AG04450 (cell line): ENCODE measurements at regions of chr3 and their contacts with region 1.

Region 1: GRCh38 chr3:123750659-123751420 is 133.3 kb downstream of the MYLK start:
- DNase-seq: peak; percentile 88
- H3K4me3 ChIP-seq: no peak overlapping the region
- H3K27ac ChIP-seq: peak overlapping the region; percentile 97
- H3K27me3 ChIP-seq: no peaks in the 10 kb centered on the region
- CTCF ChIP-seq: peak; percentile 24; the same call in 1 of the 2 replicates

Region 2: DNA sequence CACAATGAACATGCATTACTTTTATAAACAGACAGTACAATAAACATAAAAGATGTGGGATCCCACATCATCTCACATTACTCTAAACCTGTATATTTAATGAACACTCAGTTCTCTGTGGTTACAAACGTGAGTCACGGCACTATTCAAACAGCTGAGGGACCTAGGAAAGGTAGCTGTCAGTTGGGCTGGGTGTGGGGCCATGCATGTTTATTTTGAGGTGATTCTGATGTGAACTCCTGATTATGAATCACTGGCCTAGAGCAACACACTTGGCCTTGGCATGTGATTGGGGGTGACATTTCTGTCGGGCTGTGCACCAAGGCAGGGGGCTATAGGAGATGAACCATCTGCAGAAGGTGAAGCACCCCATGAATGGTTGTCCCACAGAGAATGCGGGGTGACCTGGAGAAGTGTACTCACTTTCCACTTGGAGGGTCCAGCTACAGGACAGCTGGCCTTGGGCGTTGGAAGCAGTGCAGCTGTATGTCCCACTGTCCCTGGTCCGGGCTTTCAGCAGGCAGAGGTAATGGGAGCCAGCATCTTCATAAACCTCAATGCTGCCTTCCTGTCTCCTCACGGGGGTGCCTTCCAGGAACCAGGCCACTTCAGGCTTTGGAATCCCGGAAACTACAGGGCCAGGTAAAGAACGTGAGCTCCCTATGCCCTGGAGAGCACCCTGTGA is 18.2 kb before region 1 on chr3:
- CTCF ChIA-PET with region 1: no interaction called
- POLR2A ChIA-PET with region 1: interaction called, 35 read pairs
- DNase-seq: peak; percentile 88
- H3K4me3 ChIP-seq: no peak overlapping the region
- H3K27ac ChIP-seq: peak overlapping the region; percentile 91
- H3K27me3 ChIP-seq: no peaks in the 10 kb centered on the region
- CTCF ChIP-seq: no peak

Region 3: DNA sequence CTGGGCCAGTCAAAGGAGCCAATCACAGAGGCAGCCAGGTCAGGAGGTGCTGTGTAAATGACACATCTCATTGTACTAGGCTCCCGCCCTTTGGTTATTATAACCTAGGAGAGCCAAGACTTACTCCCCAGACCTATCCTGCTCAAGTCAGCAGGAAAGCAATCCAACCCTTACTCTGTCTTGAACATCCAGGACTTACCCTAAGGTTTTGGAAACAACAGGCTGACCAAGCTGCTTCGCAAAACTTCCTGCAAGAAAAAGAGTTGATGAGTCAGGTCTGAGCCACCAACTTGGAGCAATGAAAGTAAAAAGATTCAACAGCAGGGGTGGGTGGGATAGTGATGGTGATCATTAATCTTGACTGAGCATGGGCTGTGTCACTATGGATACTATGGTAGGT is 11.1 kb before region 1 on chr3:
- CTCF ChIA-PET with region 1: interaction called, 6 read pairs
- POLR2A ChIA-PET with region 1: interaction called, 35 read pairs
- DNase-seq: no peak
- H3K4me3 ChIP-seq: no peak overlapping the region
- H3K27ac ChIP-seq: peak overlapping the region; percentile 75
- H3K27me3 ChIP-seq: no peaks in the 10 kb centered on the region
- CTCF ChIP-seq: no peak

Region 4: GRCh38 chr3:123773681-123774431 is 23.0 kb after region 1 on chr3:
- CTCF ChIA-PET with region 1: no interaction called
- POLR2A ChIA-PET with region 1: interaction called, 20 read pairs
- DNase-seq: peak; percentile 44
- H3K4me3 ChIP-seq: no peak overlapping the region
- H3K27ac ChIP-seq: peak overlapping the region; percentile 81
- H3K27me3 ChIP-seq: no peaks in the 10 kb centered on the region
- CTCF ChIP-seq: peak; percentile 26; the same call in 1 of the 2 replicates

Region 5: GRCh38 chr3:123783811-123784210 is 33.0 kb after region 1 on chr3:
- CTCF ChIA-PET with region 1: no interaction called
- POLR2A ChIA-PET with region 1: interaction called, 23 read pairs
- DNase-seq: no peak
- H3K4me3 ChIP-seq: no peak overlapping the region
- H3K27ac ChIP-seq: peak overlapping the region; percentile 68
- H3K27me3 ChIP-seq: no peaks in the 10 kb centered on the region
- CTCF ChIP-seq: no peak

Region 6: GRCh38 chr3:123791898-123792297 is 41.1 kb after region 1 on chr3:
- CTCF ChIA-PET with region 1: no interaction called
- POLR2A ChIA-PET with region 1: interaction called, 20 read pairs
- DNase-seq: no peak
- H3K4me3 ChIP-seq: no peak overlapping the region
- H3K27ac ChIP-seq: peak overlapping the region; percentile 82
- H3K27me3 ChIP-seq: no peaks in the 10 kb centered on the region
- CTCF ChIP-seq: no peak

Region 7: GRCh38 chr3:123818921-123819429 is 68.1 kb after region 1 on chr3:
- CTCF ChIA-PET with region 1: no interaction called
- POLR2A ChIA-PET with region 1: interaction called, 10 read pairs
- DNase-seq: peak; percentile 45
- H3K4me3 ChIP-seq: no peak overlapping the region
- H3K27ac ChIP-seq: peak overlapping the region; percentile 85
- H3K27me3 ChIP-seq: no peaks in the 10 kb centered on the region
- CTCF ChIP-seq: no peak